ENCODE measurements at regions of chr12 and their contacts with region 1.

Region 1: GRCh38 chr12:31682136-31682962 is 22.9 kb downstream of the ETFBKMT start:
- DNase-seq: peak; percentile 85 to 86
- H3K4me3 ChIP-seq: no peak overlapping the region
- H3K4me3 Mint-ChIP-seq: no peak overlapping the region
- H3K27ac Mint-ChIP-seq: no peak overlapping the region
- H3K4me1 ChIP-seq: no peaks in the 10 kb centered on the region; the same call in 1 of the 2 replicates
- H3K4me1 Mint-ChIP-seq: peaks cover 14% of the 10 kb centered on the region
- H3K27me3 ChIP-seq: no peaks in the 10 kb centered on the region
- H3K27me3 Mint-ChIP-seq: no peaks in the 10 kb centered on the region
- CTCF ChIP-seq: peak; percentile 78 to 94

Region 2: DNA sequence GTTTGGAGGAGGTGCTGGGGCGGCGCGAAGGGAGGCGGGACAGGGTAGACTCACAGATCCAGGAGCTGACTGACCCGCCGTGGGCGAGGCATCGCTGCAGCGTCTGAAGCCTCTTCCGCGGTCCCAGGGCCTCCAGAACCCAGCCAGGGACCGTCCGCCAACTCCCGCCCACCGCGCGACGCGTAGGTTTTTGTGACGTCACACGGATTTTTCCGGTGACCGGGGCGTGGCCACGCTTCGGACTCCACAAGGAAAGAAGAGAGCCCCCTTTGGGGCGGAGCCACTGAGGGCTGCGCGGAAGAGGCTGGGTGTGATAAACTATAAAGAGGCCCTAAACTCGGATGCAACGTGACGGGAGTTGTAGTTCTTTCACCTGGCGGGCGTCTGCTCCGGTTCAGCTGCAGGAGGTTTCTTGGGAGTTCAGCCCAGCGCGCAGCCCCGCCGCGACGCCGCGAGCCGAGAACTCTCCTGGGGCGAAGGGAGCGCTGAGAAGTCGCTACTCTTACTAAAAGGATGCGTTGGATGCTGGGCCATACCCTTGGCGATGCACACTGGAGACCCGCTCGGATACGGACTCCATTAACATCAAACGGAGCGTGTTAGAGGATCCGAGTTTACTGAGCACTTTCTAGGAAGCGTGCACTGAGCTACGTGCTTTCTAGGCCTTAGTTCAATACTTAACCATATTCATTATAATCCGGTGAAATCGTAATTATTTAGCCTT is 46.7 kb after region 1 on chr12 and contains the start of gene AMN1:
- CTCF ChIA-PET with region 1: no interaction called
- POLR2A ChIA-PET with region 1: no interaction called
- intact Hi-C with region 1: loop called (anchors 1 kb)
- DNase-seq: peak; percentile 100
- H3K4me3 ChIP-seq: peak within 1 kb of the TSS; percentile 78
- H3K4me3 Mint-ChIP-seq: peak within 1 kb of the TSS; percentile 95
- H3K27ac Mint-ChIP-seq: peak within 1 kb of the TSS; percentile 98
- H3K4me1 ChIP-seq: peaks cover 35% of the 10 kb centered on the region
- H3K4me1 Mint-ChIP-seq: peaks cover 21% of the 10 kb centered on the region
- H3K27me3 ChIP-seq: no peaks in the 10 kb centered on the region
- H3K27me3 Mint-ChIP-seq: no peaks in the 10 kb centered on the region
- CTCF ChIP-seq: no peak
- total RNA-seq, gene AMN1: 6.2 and 8.8 TPM in 2 replicates

Region 3: DNA sequence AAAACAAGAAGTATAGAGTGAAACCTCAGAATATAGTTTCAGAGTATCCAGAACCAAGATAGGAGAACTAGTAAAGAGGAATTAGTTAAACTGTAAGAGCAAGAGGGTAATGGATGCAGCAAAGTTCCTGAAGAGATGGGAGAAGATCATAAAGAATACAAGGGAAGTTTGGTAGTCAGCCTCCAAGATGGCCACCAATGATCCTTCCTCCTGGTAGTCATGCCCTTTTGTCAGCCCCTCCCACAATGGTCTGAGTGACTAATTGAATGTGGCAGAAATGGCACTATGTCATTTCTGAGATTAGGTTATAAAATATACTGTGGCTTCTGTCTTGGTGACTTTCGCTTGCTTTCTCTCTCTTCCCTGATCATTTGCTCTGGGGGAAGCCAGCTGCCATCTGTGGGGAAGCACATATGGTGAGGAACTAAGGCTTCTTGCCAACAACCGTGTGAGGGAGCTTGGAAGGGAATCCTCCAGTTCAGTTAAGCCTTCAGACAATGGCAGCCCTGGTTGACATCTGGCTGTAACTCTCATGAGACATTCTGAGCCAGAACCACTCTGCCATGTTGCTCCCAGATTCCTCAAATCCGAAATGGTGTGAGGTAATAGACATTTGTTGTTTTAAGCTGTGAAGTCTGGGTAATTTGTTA is 101.8 kb after region 1 on chr12:
- CTCF ChIA-PET with region 1: no interaction called
- POLR2A ChIA-PET with region 1: no interaction called
- intact Hi-C with region 1: no loop called
- DNase-seq: no peak
- H3K4me3 ChIP-seq: no peak overlapping the region
- H3K4me3 Mint-ChIP-seq: no peak overlapping the region
- H3K27ac Mint-ChIP-seq: no peak overlapping the region
- H3K4me1 ChIP-seq: peaks cover 12% of the 10 kb centered on the region
- H3K4me1 Mint-ChIP-seq: peaks cover 3% of the 10 kb centered on the region
- H3K27me3 ChIP-seq: no peaks in the 10 kb centered on the region
- H3K27me3 Mint-ChIP-seq: no peaks in the 10 kb centered on the region
- CTCF ChIP-seq: no peak

Region 4: GRCh38 chr12:31843398-31844095 is 161.2 kb after region 1 on chr12:
- CTCF ChIA-PET with region 1: no interaction called
- POLR2A ChIA-PET with region 1: no interaction called
- intact Hi-C with region 1: no loop called
- DNase-seq: no peak
- H3K4me3 ChIP-seq: no peak overlapping the region
- H3K4me3 Mint-ChIP-seq: no peak overlapping the region
- H3K27ac Mint-ChIP-seq: no peak overlapping the region
- H3K4me1 ChIP-seq: peaks cover 14% of the 10 kb centered on the region
- H3K4me1 Mint-ChIP-seq: peaks cover 13% of the 10 kb centered on the region
- H3K27me3 ChIP-seq: no peaks in the 10 kb centered on the region
- H3K27me3 Mint-ChIP-seq: no peaks in the 10 kb centered on the region
- CTCF ChIP-seq: no peak

Region 5: GRCh38 chr12:32002848-32003493 is 320.6 kb after region 1 on chr12:
- CTCF ChIA-PET with region 1: no interaction called
- POLR2A ChIA-PET with region 1: no interaction called
- intact Hi-C with region 1: loop called (anchors 5 kb)
- DNase-seq: no peak
- H3K4me3 ChIP-seq: no peak overlapping the region
- H3K4me3 Mint-ChIP-seq: no peak overlapping the region
- H3K27ac Mint-ChIP-seq: no peak overlapping the region
- H3K4me1 ChIP-seq: no peaks in the 10 kb centered on the region
- H3K4me1 Mint-ChIP-seq: no peaks in the 10 kb centered on the region
- H3K27me3 ChIP-seq: no peaks in the 10 kb centered on the region
- H3K27me3 Mint-ChIP-seq: no peaks in the 10 kb centered on the region
- CTCF ChIP-seq: no peak

Region 6: DNA sequence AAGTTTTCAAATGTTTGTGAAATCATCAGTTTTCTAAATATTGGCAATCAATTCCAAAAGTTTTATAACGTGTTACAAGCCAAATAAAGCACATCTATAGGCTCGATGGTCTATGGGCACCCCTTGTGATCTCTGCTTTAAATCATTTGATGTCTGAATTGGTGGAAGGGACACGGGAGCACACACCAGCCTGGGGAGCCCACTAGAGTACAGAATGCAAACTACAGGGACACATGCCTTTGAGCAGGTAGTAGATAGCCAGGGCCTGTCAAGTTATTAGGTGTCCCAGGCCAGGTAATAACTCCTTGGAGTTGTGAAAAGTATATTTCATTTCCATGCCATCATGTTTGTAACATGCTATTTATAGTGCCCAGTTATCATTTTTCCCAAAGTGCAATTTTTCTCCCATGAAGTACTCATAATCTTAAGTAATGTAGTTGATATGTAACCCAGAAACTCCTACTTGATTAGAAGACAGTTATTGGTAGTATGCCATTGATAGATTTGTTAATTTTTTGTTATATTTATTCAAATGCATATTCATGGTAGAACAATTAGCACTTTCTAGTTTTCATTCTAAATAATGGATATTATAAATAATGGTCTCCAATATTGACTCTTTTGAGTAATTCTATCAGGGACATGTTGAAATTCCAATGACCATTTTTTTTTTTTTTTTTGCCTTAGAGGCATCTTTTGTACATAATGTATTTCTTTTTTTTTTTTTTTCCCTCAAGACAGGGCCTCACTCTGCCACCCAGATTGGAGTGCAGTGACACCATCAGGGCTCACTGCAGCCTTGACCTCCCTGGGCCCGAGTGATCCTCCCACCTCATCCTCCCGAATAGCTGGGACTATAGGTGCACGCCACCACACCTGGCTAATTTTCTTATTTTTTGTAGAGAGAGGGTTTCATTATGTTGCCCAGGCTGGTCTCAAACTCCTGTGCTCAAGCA is 620.1 kb after region 1 on chr12:
- CTCF ChIA-PET with region 1: no interaction called
- POLR2A ChIA-PET with region 1: no interaction called
- intact Hi-C with region 1: loop called (anchors 1 kb)
- DNase-seq: no peak
- H3K4me3 ChIP-seq: no peak overlapping the region
- H3K4me3 Mint-ChIP-seq: no peak overlapping the region
- H3K27ac Mint-ChIP-seq: peak overlapping the region; percentile 29
- H3K4me1 ChIP-seq: 0 out of 2 replicates have a peak, but pooled peaks cover 11% of the 10 kb centered on the region
- H3K4me1 Mint-ChIP-seq: peaks cover 25% of the 10 kb centered on the region
- H3K27me3 ChIP-seq: no peaks in the 10 kb centered on the region
- H3K27me3 Mint-ChIP-seq: no peaks in the 10 kb centered on the region
- CTCF ChIP-seq: no peak

Region 7: DNA sequence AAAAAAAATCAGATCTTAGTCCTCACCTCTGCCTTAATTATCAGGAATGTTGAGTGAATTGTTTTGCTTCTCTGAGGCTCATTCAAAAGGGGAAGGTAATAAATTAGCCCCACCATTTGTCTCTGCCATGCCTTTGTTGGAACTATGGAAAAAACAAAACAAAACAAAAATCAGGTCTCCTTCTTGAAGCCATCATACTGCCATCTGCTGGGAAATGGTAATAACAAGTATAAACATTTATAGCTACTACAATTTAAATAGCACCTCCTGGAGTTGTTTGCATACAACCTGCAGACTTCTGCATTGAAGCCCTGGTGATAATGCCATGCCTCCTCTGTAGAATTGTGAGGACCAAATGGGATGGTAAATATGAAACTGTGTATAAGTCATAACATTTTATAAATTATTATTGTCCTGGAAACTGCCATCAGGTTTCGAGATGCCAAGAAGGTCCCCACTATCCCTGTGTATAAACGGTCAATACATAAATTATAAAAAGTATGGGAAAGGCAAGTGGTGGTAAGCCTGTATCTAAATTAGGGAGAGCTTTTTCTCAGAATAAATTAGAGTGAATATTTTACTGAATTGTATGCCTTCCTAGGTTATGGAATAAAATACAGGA is 629.8 kb after region 1 on chr12:
- CTCF ChIA-PET with region 1: interaction called, 4 read pairs
- POLR2A ChIA-PET with region 1: no interaction called
- intact Hi-C with region 1: loop called (anchors 1 kb)
- DNase-seq: peak in 1 of 2 experiments; percentile 58
- H3K4me3 ChIP-seq: no peak overlapping the region
- H3K4me3 Mint-ChIP-seq: peak overlapping the region; percentile 1
- H3K27ac Mint-ChIP-seq: peak overlapping the region; percentile 42
- H3K4me1 ChIP-seq: peaks cover 35% of the 10 kb centered on the region
- H3K4me1 Mint-ChIP-seq: peaks cover 41% of the 10 kb centered on the region
- H3K27me3 ChIP-seq: no peaks in the 10 kb centered on the region
- H3K27me3 Mint-ChIP-seq: no peaks in the 10 kb centered on the region
- CTCF ChIP-seq: peak; percentile 54 to 61

Region 8: DNA sequence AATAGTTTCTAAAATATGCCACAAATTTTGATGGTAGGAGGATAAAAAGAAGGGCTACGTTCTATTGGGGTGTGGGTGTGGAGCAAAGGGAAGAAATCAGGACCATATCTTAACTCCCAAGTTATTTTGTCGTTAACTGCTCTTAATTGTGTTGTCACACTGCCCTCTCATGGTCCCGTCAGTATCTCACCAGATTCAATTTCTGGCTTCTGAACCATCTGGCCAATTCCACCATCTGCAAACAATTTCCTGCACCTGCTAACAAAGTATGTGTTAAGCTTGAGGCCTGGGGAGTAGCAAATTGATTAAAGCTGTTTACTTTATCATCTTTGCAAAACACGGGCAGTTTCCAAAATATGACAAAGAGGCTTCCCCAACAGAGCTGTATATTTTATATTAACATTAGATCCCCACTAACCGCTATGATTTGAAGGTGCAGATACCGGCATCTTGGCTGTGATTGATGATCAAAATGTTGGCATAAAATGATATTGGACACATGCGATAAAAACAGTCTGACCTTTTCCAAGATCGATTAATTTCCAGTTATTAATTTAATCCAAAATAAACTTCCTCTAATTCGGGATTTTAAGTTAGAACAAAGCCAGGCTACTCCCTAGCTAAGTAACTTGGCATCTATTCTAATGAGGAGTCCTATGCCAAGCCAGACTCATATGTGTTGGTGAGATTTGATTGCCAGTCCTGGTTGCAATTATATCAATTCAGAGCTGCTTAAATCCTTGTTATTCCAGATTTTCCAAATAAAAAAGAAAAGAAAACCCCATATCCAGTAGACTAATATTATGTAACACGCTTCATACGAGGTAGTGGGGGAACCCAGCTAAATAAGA is 989.8 kb after region 1 on chr12:
- CTCF ChIA-PET with region 1: no interaction called
- POLR2A ChIA-PET with region 1: no interaction called
- intact Hi-C with region 1: loop called (anchors 1 kb)
- DNase-seq: peak; percentile 57 to 74
- H3K4me3 ChIP-seq: no peak overlapping the region
- H3K4me3 Mint-ChIP-seq: no peak overlapping the region
- H3K27ac Mint-ChIP-seq: no peak overlapping the region
- H3K4me1 ChIP-seq: no peaks in the 10 kb centered on the region; the same call in 1 of the 2 replicates
- H3K4me1 Mint-ChIP-seq: no peaks in the 10 kb centered on the region
- H3K27me3 ChIP-seq: no peaks in the 10 kb centered on the region
- H3K27me3 Mint-ChIP-seq: no peaks in the 10 kb centered on the region
- CTCF ChIP-seq: peak; percentile 73 to 80